ENCODE measurements at regions of chr10 and their contacts with region 1.

Region 1: GRCh38 chr10:69262292-69262751 is 16.0 kb upstream of the HK1 start:
- DNase-seq: no peak
- H3K4me3 Mint-ChIP-seq: no peak overlapping the region
- H3K27ac Mint-ChIP-seq: peak overlapping the region; percentile 55
- H3K4me1 Mint-ChIP-seq: peaks cover 18% of the 10 kb centered on the region
- H3K27me3 Mint-ChIP-seq: no peaks in the 10 kb centered on the region

Region 2: GRCh38 chr10:68934994-68935393 is 327.3 kb before region 1 on chr10:
- CTCF ChIA-PET with region 1: no interaction called
- POLR2A ChIA-PET with region 1: no interaction called
- intact Hi-C with region 1: no loop called
- DNase-seq: no peak
- H3K4me3 Mint-ChIP-seq: no peak overlapping the region
- H3K27ac Mint-ChIP-seq: no peak overlapping the region
- H3K4me1 Mint-ChIP-seq: peaks cover 13% of the 10 kb centered on the region
- H3K27me3 Mint-ChIP-seq: no peaks in the 10 kb centered on the region

Region 3: DNA sequence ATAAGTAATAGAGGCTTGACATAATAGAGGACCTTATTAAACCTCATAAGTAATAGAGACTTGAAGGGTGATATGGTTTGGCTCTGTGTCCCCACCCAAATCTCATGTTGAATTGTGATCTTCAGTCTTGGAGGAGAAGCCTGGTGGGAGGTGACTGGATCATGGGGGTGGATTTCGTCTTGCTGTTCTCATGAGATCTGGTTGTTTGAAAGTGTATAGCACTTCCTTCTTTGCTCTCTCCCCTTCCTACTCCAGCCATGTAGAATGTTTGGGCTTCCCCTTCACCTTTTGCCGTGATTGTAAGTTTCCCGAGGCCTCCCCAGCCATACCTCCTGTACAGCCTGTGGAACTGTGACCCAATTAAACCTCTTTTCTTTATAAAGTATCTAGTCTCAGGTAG is 265.1 kb before region 1 on chr10:
- CTCF ChIA-PET with region 1: no interaction called
- POLR2A ChIA-PET with region 1: no interaction called
- intact Hi-C with region 1: loop called (anchors 1 kb)
- DNase-seq: peak; percentile 33
- H3K4me3 Mint-ChIP-seq: peak overlapping the region; percentile 40
- H3K27ac Mint-ChIP-seq: peak overlapping the region; percentile 94
- H3K4me1 Mint-ChIP-seq: peaks cover 52% of the 10 kb centered on the region
- H3K27me3 Mint-ChIP-seq: no peaks in the 10 kb centered on the region

Region 4: DNA sequence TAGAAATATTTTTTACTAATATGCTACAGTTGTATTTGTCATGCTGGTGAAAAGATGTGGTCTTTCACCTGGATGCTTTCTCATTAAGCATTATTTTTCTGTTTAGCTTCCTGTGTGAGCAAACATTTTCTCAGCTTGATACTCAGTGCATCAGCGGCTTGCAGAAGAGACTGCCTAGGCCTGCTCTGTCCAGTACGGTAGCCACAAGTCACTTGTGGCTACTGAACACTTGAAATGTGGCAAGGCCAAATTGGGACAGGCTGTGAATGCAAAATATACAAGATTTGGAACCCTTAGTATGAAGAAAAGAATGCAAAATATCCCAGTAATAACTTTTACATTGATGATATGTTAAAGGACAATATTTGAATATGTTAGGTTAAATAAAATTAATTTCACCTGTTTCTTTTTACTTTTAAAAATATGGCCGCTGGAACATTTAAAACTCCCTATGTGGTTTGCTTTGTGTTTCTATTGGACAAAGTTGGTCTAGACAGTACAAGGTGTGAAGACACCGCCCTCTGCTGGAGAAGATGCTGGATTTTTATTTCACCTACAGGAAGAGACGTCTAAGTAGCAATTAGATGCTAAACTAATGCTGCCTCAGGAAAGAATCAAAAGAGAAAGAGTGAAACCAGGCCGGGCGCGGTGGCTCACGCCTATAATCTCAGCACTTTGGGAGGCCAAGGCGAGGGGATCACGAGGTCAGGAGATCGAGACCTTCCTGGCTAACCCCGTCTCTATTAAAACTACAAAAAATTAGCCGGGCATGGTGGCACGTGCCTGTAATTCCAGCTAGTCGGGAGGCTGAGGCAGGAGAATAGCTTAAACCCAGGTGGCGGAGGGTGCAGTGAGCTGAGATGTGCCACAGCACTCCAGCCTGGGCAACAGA is 169.1 kb before region 1 on chr10:
- CTCF ChIA-PET with region 1: no interaction called
- POLR2A ChIA-PET with region 1: no interaction called
- intact Hi-C with region 1: no loop called
- DNase-seq: peak; percentile 86
- H3K4me3 Mint-ChIP-seq: peak overlapping the region; percentile 59
- H3K27ac Mint-ChIP-seq: peak overlapping the region; percentile 84
- H3K4me1 Mint-ChIP-seq: peaks cover 54% of the 10 kb centered on the region
- H3K27me3 Mint-ChIP-seq: no peaks in the 10 kb centered on the region